MCF 10A (cell line): ENCODE measurements at regions of chr12 and their contacts with region 1.

Region 1: DNA sequence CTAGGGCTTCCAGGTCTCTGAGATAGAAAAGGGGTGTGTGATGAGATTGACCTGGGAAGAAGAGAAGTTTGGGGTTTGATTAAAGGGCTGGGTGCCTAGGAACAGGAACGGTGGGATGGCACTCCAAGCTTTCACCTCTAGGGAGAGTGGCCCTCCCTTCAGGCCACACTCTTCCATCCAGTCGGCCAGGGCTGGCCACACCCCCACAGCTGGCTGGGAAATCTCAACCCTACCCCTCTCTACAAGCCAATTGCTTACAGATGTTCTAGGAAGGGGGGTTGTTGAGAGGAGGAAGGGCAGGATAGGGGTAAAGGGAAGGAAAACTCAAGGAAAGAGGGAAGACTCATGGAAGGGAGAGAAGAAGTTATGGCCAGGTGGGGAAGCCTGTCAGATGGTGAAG is 6.6 kb upstream of the ITGA5 start:
- DNase-seq: no peak
- H3K4me3 Mint-ChIP-seq: no peak overlapping the region
- H3K27ac Mint-ChIP-seq: no peak overlapping the region
- H3K4me1 Mint-ChIP-seq: peaks cover 71% of the 10 kb centered on the region
- H3K27me3 Mint-ChIP-seq: no peaks in the 10 kb centered on the region
- CTCF ChIP-seq: no peak

Region 2: GRCh38 chr12:54262403-54262925 is 163.2 kb before region 1 on chr12:
- CTCF ChIA-PET with region 1: no interaction called
- POLR2A ChIA-PET with region 1: no interaction called
- intact Hi-C with region 1: no loop called
- DNase-seq: peak; percentile 81
- H3K4me3 Mint-ChIP-seq: peak overlapping the region; percentile 29
- H3K27ac Mint-ChIP-seq: peak overlapping the region; percentile 49
- H3K4me1 Mint-ChIP-seq: peaks cover 14% of the 10 kb centered on the region
- H3K27me3 Mint-ChIP-seq: no peaks in the 10 kb centered on the region
- CTCF ChIP-seq: no peak

Region 3: DNA sequence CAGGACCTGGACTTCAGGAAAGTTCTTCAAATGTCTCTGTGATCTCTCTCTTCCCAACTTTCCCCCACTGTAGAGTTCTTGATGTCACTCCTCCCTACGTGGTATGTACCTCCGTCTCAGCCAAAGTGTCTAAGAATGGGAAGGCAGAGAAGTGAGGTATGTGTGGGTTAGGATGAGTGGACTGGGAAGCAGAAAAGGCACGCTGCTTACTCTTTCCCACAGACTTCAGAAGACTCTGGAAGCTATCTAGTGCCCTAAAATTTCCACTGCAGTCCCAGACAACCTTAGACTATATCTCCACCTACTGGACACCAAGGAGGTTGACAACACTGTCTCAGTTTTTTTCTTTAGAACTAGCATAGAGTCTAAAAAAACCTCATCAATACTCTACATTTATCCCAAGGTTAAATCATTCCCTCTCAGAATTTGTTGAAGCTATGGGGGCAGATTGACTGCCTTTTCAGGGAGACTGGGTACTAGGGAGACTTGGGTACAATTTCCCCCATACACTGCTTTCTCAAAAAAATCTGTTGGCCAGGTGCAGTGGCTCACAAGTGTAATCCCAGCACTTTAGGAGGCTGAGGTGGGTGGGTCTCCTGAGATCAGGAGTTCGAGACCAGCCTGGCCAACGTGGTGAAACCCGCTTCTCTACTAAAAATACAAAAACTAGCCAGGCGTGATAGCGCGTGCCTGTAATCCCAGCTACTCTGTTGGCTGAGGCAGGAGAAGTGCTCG is 14.0 kb after region 1 on chr12:
- CTCF ChIA-PET with region 1: interaction called, 127 read pairs
- POLR2A ChIA-PET with region 1: no interaction called
- intact Hi-C with region 1: no loop called
- DNase-seq: peak; percentile 73
- H3K4me3 Mint-ChIP-seq: no peak overlapping the region
- H3K27ac Mint-ChIP-seq: peak overlapping the region; percentile 22
- H3K4me1 Mint-ChIP-seq: peaks cover 13% of the 10 kb centered on the region
- H3K27me3 Mint-ChIP-seq: no peaks in the 10 kb centered on the region
- CTCF ChIP-seq: peak; percentile 91

Region 4: GRCh38 chr12:54486173-54486867 is 60.6 kb after region 1 on chr12:
- CTCF ChIA-PET with region 1: no interaction called
- POLR2A ChIA-PET with region 1: no interaction called
- intact Hi-C with region 1: no loop called
- DNase-seq: no peak
- H3K4me3 Mint-ChIP-seq: no peak overlapping the region
- H3K27ac Mint-ChIP-seq: no peak overlapping the region
- H3K4me1 Mint-ChIP-seq: no peaks in the 10 kb centered on the region
- H3K27me3 Mint-ChIP-seq: peaks cover 19% of the 10 kb centered on the region
- CTCF ChIP-seq: no peak

Region 5: GRCh38 chr12:54658306-54659264 is 232.9 kb after region 1 on chr12:
- CTCF ChIA-PET with region 1: no interaction called
- POLR2A ChIA-PET with region 1: no interaction called
- intact Hi-C with region 1: no loop called
- DNase-seq: peak; percentile 57
- H3K4me3 Mint-ChIP-seq: no peak overlapping the region
- H3K27ac Mint-ChIP-seq: no peak overlapping the region
- H3K4me1 Mint-ChIP-seq: no peaks in the 10 kb centered on the region
- H3K27me3 Mint-ChIP-seq: peaks cover 58% of the 10 kb centered on the region
- CTCF ChIP-seq: peak; percentile 31

Region 6: DNA sequence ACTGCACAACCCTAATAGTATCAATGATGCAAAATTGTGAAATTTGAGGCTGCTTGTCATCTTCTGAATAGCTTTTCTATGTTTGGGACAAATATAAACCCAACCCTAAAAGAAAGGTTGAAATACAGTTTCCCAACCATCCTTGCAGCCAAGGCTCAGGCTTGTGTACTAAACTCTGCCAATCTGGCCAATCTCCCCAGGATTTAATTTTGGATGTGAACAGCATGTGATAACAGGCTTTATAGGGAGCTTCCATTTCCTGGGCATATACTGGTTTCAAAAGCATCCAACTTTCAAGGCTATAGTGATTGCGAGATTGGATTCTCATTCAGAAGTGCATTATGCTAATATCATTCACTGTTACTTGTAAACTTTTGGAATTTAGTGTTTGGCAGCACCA is 372.9 kb after region 1 on chr12:
- CTCF ChIA-PET with region 1: no interaction called
- POLR2A ChIA-PET with region 1: no interaction called
- intact Hi-C with region 1: no loop called
- DNase-seq: no peak
- H3K4me3 Mint-ChIP-seq: no peak overlapping the region
- H3K27ac Mint-ChIP-seq: no peak overlapping the region
- H3K4me1 Mint-ChIP-seq: no peaks in the 10 kb centered on the region
- H3K27me3 Mint-ChIP-seq: peaks cover 39% of the 10 kb centered on the region
- CTCF ChIP-seq: no peak